Activated CD4-positive, alpha-beta T cell treated with anti-CD3 and anti-CD28 coated beads, Interleukin-2, amount 10 ng/mL, durations not matched to agents 24 days and 14 days (primary cell): ENCODE measurements at regions of chr7 and their contacts with region 1.

Region 1: DNA sequence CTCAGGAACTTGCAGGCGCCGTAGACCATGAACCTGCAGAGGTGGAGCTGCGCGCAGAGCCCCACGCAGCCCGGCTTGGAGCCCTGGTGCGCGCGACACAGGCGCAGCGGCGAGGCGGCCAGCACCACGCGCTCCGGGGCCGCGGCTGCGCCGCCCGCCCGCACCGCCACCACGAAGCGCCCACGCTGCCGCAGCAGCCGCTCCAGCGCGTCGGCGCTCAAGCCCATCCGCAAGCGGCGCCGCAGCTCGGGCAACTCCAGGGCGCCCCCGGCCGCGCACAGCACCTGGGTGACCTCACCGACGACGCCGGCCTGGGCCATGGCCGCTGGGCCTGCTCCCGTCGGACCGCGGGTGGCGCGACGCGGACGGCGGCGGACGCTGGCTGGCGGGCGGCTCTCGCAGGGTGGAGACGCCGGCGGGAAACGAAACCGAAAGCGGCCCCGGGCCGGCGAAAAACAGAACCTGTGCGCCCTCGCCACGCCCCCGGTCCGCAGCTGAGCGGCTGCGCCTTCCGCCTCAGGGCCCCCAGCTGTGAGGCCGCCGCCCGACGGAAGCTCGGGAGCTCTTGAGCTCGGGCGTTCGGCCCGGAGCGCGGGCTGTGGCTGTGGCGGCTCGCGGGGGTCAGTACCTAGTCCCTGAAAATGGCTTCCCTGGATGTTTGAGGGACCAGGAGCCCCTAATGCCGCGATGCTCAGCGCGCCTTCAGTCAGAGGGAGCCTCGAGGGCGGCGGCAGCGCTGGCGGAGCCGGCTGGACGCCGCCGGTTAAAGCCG is at the start of gene PARP12:
- DNase-seq: peak; percentile 97
- H3K4me3 Mint-ChIP-seq: peak within 1 kb of the TSS; percentile 83
- H3K27ac Mint-ChIP-seq: peak within 1 kb of the TSS; percentile 94
- H3K4me1 Mint-ChIP-seq: peaks cover 48% of the 10 kb centered on the region
- H3K27me3 Mint-ChIP-seq: peaks cover 2% of the 10 kb centered on the region
- total RNA-seq, gene PARP12: 53.3 and 55.9 TPM in 2 replicates

Region 2: DNA sequence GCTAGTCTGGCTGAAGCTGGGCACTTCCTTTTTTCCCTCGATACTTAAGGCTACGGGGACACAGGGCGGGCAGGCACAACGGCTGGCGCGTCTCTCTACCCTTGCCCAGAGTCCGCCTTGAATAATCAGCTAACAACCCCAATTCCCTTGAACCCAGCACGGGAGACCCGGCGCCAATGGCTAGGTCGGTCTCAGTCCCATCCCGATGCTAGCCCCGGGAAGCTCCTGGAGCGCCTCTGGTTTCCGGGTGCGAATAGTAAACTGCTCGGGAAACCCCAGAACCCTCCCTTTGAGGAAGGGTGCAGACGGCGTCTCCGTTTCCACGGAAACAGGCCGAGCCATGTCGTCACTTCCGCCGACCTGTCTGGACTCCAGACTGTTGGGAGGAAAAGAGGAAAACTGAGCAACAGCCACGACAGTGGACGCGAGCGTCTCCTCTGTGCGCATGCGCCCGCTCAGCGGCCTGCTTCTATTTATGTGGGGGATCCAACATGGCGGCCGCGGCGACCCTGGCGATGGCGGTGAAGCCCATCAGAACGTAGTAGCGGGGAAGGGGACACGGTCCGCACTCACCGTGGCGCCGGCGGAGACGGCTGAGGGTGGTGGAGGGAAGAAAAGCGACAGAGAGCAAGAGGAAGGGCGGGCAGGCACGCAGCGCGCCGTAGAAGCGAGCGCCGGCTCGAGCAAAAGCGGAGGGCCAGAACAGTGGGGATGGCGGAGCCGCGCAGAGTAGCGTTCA is 831.8 kb before region 1 on chr7 and contains the start of gene UBN2:
- intact Hi-C with region 1: loop called (anchors 5 kb)
- DNase-seq: peak; percentile 97
- H3K4me3 Mint-ChIP-seq: peak within 1 kb of the TSS; percentile 98
- H3K27ac Mint-ChIP-seq: peak within 1 kb of the TSS; percentile 97
- H3K4me1 Mint-ChIP-seq: peaks cover 20% of the 10 kb centered on the region
- H3K27me3 Mint-ChIP-seq: peaks cover 21% of the 10 kb centered on the region
- total RNA-seq, gene UBN2: 12.5 and 15.2 TPM in 2 replicates

Region 3: DNA sequence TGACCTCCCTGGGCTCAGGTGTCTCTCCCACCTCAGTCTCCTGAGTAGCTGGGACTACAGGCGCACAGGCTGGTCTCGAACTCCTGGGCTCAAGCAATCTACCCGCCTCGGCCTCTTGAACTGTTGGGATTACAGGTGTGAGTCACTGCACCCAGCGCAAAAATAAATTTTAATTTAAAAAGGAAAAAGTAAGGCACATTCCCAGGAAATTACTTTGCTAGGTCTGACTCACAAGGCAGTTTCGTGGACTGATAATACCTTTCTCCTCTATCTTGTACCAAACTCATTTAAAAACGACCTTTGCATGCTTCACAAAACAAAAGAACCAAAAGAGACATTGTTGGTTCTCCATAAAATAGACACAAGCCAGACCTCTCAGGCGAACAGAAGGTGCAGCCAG is 29.7 kb before region 1 on chr7:
- intact Hi-C with region 1: no loop called
- DNase-seq: no peak
- H3K4me3 Mint-ChIP-seq: no peak overlapping the region
- H3K27ac Mint-ChIP-seq: no peak overlapping the region
- H3K4me1 Mint-ChIP-seq: peaks cover 27% of the 10 kb centered on the region
- H3K27me3 Mint-ChIP-seq: no peaks in the 10 kb centered on the region

Region 4: DNA sequence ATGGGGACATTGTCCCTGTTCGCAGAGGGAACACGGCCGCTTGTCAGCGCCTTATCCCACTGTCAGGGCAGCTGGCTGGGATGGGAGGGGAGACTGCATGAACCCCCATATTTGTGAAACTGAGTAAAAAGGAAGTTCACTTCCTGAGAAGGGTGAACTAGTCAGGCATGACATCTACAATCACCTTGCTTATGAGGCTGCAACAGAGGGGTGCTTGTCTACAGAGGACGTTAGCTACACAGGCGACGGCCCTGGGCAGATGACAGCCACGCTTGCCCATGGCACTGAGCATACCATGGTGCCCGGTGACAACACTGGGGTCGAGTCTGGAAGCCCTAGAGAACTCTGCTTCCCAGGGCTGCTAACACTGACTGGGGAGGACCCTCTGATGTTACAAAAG is 160.1 kb after region 1 on chr7:
- intact Hi-C with region 1: loop called (anchors 5 kb)
- DNase-seq: no peak
- H3K4me3 Mint-ChIP-seq: no peak overlapping the region
- H3K27ac Mint-ChIP-seq: peak overlapping the region; percentile 25
- H3K4me1 Mint-ChIP-seq: peaks cover 45% of the 10 kb centered on the region
- H3K27me3 Mint-ChIP-seq: no peaks in the 10 kb centered on the region

Region 5: DNA sequence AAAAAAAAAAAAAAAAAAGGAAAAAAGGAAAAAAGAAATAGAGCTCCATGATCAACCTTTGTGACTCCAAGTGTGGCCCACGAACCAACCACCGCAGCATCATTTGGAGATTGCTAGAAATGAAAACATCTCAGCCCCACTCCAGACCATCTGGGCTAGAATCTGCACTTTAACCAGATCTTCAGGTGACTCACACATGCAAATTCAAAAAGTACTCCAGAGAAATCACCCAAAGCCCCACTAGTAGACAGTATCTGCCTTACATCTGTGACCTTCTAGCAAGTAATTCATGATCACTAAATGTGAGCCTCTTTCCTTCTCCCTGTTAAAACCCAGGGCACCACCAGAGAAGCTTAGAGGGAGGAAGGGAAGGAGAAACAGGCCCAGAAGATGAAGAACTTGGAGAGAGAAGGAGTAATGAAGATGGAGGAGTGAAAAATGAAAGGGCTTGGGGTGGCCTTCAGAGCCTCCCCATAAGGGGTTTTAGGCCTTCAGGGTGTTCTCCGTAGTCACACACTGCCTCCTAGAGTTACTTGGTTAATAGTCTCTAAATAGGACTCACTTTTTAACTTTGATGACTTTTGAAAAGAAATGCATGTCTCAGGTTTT is 241.6 kb after region 1 on chr7:
- intact Hi-C with region 1: loop called (anchors 5 kb)
- DNase-seq: peak; percentile 83
- H3K4me3 Mint-ChIP-seq: no peak overlapping the region
- H3K27ac Mint-ChIP-seq: peak overlapping the region; percentile 89
- H3K4me1 Mint-ChIP-seq: peaks cover 10% of the 10 kb centered on the region
- H3K27me3 Mint-ChIP-seq: no peaks in the 10 kb centered on the region

Region 6: DNA sequence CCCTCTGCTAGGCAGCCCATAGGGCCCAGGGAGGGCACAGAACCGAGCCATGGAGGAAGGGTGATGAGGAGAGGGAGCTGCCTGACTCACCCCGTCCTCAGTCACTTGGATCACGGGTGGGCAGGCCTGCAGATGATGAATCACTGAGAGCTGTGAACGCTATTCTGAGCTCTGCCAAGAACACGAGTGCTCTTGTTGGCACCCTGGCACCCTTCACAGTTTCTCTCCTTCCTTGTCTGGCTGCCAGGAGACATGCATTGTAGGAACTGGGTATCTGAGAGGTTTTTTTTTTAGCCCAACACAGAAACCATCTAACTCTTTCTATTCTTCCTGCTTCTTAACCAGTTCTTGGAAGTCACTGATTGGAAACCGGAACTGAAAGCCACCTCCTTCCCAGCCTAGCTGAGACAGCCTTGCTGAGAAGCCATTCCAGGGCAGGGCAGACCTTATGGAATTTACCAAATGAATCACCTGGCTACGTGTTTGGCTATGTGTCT is 253.5 kb after region 1 on chr7:
- intact Hi-C with region 1: loop called (anchors 5 kb)
- DNase-seq: peak; percentile 62
- H3K4me3 Mint-ChIP-seq: peak overlapping the region; percentile 39
- H3K27ac Mint-ChIP-seq: peak overlapping the region; percentile 65
- H3K4me1 Mint-ChIP-seq: peaks cover 40% of the 10 kb centered on the region
- H3K27me3 Mint-ChIP-seq: no peaks in the 10 kb centered on the region